ENCODE measurements at regions of chr9 and their contacts with region 1.

Region 1: GRCh38 chr9:33623658-33624586 is 99.9 kb downstream of the ANKRD18B start:
- DNase-seq: peak in 1 of 2 donors; percentile 33
- H3K4me3 ChIP-seq: no peak overlapping the region
- H3K27ac ChIP-seq: no peak overlapping the region
- H3K4me1 ChIP-seq: no peaks in the 10 kb centered on the region
- H3K27me3 ChIP-seq: peaks cover 0 to 9% of the 10 kb centered on the region in 2 donors
- CTCF ChIP-seq: peak; percentile 80 to 81

Region 2: DNA sequence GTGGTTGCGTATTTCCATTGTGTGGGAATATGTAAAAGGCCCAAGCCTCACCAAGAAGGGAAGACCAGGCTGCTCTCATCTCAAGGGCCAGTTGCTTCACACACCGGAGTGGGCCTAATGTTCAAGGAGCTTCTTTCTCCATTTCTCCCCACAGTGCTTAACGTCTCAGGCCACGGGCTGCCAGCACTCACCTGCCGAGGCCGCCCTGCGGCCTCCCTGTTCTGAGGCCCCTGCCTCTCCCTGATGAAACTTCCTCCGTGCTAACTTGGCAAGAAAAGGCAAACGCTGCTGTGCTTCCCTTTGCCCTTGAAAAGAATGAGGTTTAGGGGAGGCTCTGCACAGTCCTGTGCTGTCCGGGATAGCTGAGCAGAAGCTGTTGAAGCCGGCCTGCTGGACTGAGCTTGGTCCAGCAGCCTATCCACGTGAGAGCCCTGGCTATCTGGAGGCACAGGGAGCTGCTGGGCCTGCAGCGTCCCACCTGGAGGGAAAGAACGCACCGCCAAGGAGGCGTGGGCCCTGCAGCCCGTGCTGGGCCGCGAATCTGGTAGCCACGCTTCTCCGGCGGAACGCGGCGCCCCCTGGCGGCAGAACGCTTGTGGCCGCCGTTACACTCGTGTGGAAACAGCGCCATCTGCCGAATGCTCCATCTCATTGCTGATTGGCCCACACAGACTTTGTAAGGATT is 97.9 kb after region 1 on chr9:
- intact Hi-C with region 1: loop called (anchors 2 kb)
- DNase-seq: peak; percentile 69 to 85
- H3K4me3 ChIP-seq: no peak overlapping the region
- H3K27ac ChIP-seq: no peak overlapping the region
- H3K4me1 ChIP-seq: peaks cover 0 to 20% (median 12%) of the 10 kb centered on the region in 4 donors
- H3K27me3 ChIP-seq: peaks cover 0 to 4% of the 10 kb centered on the region in 2 donors
- CTCF ChIP-seq: peak; percentile 100

Measured in tibial artery (tissue), 4 donors.